ENCODE measurements at regions of chr17 and their contacts with region 1.

Region 1: DNA sequence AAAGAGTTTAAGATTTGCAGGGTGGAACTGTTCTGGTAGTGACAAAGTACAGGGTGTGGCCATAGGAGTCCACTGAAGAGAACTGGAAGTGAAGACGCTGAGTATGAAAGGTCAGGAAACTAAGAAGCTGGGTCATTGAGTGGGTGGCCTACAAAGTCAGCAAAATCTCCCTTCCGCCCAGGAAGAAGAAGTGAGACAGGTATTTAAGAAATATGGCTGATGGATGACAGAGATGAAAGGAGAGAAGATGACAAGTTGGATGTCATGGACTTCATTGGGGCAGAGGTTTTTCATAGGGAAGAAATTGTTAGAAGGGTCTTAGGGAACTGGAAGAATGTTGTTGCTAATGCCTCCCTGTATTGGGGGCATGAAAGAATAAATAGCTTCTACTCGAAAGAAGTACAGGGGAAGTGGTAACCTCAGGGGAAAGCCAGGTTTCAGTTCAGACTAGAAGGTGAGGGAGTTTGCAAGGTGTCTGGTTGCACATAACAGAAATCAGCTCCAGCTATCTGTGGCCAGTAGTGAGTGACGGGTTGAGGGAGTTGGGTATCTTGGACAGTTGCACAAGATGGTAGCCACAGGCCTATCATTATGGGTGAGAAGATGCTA is 33.6 kb upstream of the MED13 start:
- DNase-seq: peak; percentile 75
- CTCF ChIP-seq: no peak

Region 2: DNA sequence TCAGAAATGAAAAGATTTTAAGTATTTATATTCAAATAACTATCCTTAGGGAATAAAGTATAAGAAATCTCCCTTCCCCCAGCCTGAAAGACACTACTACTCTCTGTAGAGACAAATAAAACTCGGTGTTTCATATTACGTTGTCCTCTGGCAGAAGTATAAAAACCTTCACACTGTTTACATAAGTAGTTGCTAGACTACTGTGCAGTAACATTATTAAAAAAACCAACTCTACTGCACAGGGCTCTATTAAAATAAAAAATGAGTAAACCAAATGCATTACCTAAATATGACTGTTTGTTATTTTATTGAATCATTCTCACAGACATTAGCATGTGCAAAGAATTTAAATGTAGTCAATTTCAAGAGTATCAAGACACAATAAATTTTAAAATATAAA is 101.1 kb before region 1 on chr17:
- CTCF ChIA-PET with region 1: no interaction called
- POLR2A ChIA-PET with region 1: no interaction called
- DNase-seq: no peak
- CTCF ChIP-seq: no peak

Region 3: DNA sequence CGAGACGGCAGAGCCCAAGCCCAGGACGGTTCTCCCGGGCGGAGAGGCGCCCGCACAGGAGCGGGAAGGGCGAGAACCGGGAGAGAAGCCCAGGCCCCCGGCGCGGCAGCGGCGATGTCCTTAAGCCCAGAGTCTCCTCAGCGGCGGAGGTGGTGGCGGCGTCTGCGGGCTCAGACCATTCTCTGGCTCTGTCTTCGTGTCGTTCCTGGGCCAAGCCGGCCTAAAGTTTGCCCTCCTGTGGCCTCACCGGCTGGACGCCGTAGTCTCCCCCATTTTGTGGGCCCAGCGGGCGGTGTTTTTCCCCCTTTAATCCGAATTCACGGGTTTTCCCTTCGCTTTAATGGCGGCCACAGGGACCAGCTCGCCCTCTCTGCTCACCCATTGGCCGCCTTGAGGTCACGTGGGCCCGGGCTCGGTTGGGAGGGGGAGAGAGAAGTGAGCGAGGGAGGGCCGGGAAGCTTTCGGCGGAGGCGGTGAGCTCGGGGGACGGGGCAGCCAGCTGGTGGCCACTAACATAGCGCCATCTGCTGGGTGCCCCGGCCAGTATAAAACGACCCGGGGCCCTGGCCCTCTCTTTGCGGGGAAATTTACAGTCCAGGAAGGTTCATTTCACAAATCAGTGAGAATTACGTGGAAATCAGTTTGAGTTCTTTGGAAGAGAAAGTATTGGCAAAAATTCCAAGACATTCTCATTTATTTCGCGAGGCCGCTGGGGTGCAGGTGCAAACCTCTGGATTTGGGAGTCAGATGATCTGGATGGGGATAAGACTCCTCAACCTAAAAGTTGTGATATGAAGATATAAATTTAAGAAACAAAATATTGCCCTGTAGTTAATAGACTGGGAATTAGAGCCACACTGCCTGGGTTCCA is 32.9 kb before region 1 on chr17:
- CTCF ChIA-PET with region 1: interaction called, 18 read pairs
- POLR2A ChIA-PET with region 1: interaction called, 4 read pairs
- DNase-seq: peak; percentile 98
- CTCF ChIP-seq: peak; percentile 68

Region 4: DNA sequence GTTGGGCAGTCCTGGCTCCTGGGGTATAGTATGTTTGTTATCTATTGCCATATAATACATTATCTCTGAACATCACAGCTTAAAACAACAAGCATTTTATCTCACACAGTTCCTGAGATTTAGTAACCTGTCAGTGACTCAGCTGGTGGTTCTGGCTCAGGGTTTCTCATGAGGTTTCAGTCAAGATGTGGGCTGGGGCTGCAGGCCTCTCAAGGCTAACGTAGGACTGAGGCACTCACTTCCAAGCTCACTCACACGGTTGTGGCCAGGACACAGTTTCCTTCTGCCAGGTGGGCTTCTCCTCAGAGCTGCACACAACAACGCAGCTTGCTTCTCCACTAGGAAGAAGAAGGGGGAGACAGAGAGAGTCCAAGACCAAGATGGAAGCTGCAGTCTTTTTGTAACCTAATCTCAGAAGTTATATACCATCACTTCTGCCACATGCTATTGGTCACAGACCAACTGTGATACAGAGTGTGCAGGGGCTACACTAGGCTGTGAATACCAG is 23.4 kb before region 1 on chr17:
- CTCF ChIA-PET with region 1: interaction called, 10 read pairs
- POLR2A ChIA-PET with region 1: no interaction called
- DNase-seq: no peak
- CTCF ChIP-seq: no peak

Region 5: GRCh38 chr17:62188713-62189112 is 90.0 kb after region 1 on chr17:
- CTCF ChIA-PET with region 1: no interaction called
- POLR2A ChIA-PET with region 1: no interaction called
- DNase-seq: no peak
- CTCF ChIP-seq: no peak